ENCODE measurements at regions of chr11 and their contacts with region 1.

Region 1: GRCh38 chr11:93197380-93198214 is at the start of gene SLC36A4:
- DNase-seq: peak; percentile 96
- H3K4me3 Mint-ChIP-seq: peak within 1 kb of the TSS; percentile 86
- H3K27ac Mint-ChIP-seq: peak within 1 kb of the TSS; percentile 87
- H3K4me1 Mint-ChIP-seq: peaks cover 13% of the 10 kb centered on the region
- H3K27me3 Mint-ChIP-seq: peaks cover 19% of the 10 kb centered on the region
- total RNA-seq, gene SLC36A4: 14.7 and 16.1 TPM in 2 replicates

Region 2: GRCh38 chr11:92969634-92970347 is 227.8 kb before region 1 on chr11 and contains the start of gene MTNR1B:
- intact Hi-C with region 1: loop called (anchors 10 kb)
- DNase-seq: no peak
- H3K4me3 Mint-ChIP-seq: no peak within 1 kb of the TSS
- H3K27ac Mint-ChIP-seq: no peak within 1 kb of the TSS
- H3K4me1 Mint-ChIP-seq: peaks cover 4% of the 10 kb centered on the region
- H3K27me3 Mint-ChIP-seq: peaks cover 8% of the 10 kb centered on the region
- total RNA-seq, gene MTNR1B: not detected in 2 replicates

Region 3: GRCh38 chr11:92980312-92980711 is 217.3 kb before region 1 on chr11:
- intact Hi-C with region 1: no loop called
- DNase-seq: no peak
- H3K4me3 Mint-ChIP-seq: no peak overlapping the region
- H3K27ac Mint-ChIP-seq: no peak overlapping the region
- H3K4me1 Mint-ChIP-seq: no peaks in the 10 kb centered on the region
- H3K27me3 Mint-ChIP-seq: no peaks in the 10 kb centered on the region

Region 4: DNA sequence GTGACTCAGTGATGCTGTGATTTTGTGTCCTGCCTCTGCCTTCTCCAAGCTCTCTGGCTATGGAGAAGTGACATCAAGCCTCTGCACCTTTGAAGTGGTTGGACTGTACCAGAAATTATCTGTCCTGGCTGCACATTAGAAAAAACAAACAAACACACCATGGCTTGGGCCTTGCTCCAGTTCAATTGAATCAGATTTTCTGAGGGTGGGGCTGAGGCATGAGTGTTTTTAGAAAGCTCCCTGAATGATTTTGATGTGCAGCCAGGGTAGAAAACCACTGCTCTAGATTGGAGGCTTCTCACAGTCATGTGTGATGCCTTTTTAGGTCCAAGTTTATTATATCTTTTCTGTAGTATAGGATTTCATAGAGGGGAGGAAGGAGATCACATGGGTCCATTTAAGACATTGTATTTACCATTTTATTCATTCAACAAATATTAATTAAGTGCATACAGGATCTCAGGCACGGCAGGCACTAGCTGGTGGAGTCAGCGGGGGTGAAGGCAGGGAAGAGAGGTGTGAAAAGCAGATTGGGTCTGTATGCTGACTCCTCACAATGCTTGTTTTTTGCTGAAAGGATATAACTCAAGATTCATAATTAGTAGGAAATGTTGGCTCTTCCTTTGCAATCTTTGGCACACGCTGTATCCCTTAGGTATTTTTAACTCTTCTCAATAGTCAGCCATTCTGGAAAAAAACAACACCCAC is 660.0 kb after region 1 on chr11:
- intact Hi-C with region 1: no loop called
- DNase-seq: no peak
- H3K4me3 Mint-ChIP-seq: no peak overlapping the region
- H3K27ac Mint-ChIP-seq: no peak overlapping the region
- H3K4me1 Mint-ChIP-seq: no peaks in the 10 kb centered on the region
- H3K27me3 Mint-ChIP-seq: peaks cover 20% of the 10 kb centered on the region

Region 5: GRCh38 chr11:94134651-94135512 is 937.3 kb after region 1 on chr11:
- intact Hi-C with region 1: loop called (anchors 10 kb)
- DNase-seq: peak; percentile 67
- H3K4me3 Mint-ChIP-seq: peak overlapping the region; percentile 42
- H3K27ac Mint-ChIP-seq: peak overlapping the region; percentile 81
- H3K4me1 Mint-ChIP-seq: peaks cover 42% of the 10 kb centered on the region
- H3K27me3 Mint-ChIP-seq: no peaks in the 10 kb centered on the region